ENCODE measurements at regions of chr20 and their contacts with region 1.

Region 1: DNA sequence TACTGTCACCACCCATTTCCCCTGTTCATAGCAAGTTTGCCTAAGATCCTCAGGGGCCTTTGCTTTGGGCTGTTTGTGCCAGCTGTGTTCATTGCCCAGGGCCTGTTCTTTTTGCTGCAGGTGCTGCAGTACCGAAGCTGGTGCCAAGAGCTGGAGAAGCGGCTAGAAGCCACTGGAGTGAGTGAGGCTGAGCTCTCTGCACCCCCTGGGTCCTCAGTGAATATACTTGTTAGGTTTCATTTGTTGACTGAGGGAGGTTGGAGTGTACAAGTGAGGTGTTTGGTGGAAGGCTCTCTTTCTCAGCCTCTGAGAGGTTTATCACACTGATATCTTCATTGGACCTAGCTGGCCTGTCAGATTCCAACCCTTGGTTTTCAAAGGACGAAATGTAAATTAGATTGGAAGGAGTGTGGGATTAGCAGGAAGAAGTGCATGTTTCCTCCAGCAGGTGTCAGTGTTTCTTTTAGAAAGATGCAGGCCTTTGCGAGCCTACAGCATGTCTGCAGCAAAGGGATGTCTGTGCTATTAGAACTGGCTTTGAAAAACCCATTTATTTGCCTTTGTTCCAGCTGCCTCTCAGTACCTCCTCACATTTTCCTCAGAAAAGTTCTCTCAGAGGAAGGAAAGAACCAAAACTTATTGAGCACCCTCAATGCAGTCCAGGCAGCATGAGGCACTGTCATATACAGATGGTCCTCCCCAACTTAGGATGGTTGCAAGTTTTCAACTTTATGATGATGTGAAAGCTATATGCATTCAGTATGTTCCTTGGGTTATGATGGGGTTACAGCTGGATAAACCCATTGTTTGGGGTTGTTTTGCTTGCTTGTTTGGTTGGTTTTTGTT is 8.3 kb downstream of the CEP250 start:
- DNase-seq: peak in 5 of 10 donors; percentile 50 to 72 (median 55)
- H3K4me3 ChIP-seq: no peak overlapping the region
- H3K27ac ChIP-seq: peak overlapping the region in 5 of 59 donors; percentile 7 to 34 (median 19)
- H3K27me3 ChIP-seq: no peaks in the 10 kb centered on the region
- CTCF ChIP-seq: peak; percentile 61 to 92 (median 83)

Region 2: GRCh38 chr20:35120012-35120701 is 343.5 kb before region 1 on chr20:
- intact Hi-C with region 1: no loop called
- DNase-seq: no peak
- H3K4me3 ChIP-seq: no peak overlapping the region
- H3K27ac ChIP-seq: no peak overlapping the region
- H3K27me3 ChIP-seq: no peaks in the 10 kb centered on the region
- CTCF ChIP-seq: no peak

Region 3: DNA sequence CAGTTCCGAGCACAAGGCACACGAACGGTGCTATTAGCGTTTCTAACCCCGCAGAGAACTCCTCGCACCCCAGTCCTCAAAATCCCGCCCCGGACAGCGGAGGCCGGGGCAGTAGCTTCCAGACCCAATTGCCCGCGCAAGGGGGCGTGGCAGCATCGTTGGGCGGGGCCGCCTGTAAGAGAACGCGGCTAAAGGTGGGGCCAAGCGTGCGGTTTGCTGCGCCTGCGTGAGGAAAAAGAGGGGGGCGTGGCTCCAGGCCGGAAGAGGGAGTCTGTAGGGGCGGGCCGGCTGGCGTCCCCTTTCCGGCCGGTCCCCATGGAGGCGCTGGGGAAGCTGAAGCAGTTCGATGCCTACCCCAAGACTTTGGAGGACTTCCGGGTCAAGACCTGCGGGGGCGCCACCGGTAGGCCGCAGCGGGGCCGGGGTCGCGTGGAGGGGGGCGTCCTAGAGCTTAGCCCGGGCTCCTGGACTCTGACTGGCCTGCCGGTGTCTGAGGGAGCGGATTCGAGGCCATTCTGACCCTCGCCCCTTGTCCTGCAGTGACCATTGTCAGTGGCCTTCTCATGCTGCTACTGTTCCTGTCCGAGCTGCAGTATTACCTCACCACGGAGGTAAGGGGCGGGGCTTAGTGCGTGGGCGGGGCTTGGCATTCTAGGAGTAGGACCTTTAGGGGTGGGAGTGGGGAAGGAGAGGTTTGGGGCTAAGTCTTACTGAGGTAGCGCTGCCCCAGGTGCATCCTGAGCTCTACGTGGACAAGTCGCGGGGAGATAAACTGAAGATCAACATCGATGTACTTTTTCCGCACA is 78.3 kb after region 1 on chr20 and contains the start of gene ERGIC3:
- intact Hi-C with region 1: loop called in 1 of 2 experiments (anchors 5 kb)
- DNase-seq: peak; percentile 89 to 96 (median 94)
- H3K4me3 ChIP-seq: peak within 1 kb of the TSS; percentile 73 to 99 (median 91)
- H3K27ac ChIP-seq: peak within 1 kb of the TSS in 36 of 59 donors; percentile 10 to 86 (median 61)
- H3K27me3 ChIP-seq: no peaks in the 10 kb centered on the region
- CTCF ChIP-seq: peak in 52 of 56 donors; percentile 16 to 70 (median 48)
- total RNA-seq, gene ERGIC3: 88.7 to 138 (median 107) TPM